PC-9 (cell line): ENCODE measurements at regions of chr5 and their contacts with region 1.

Region 1: DNA sequence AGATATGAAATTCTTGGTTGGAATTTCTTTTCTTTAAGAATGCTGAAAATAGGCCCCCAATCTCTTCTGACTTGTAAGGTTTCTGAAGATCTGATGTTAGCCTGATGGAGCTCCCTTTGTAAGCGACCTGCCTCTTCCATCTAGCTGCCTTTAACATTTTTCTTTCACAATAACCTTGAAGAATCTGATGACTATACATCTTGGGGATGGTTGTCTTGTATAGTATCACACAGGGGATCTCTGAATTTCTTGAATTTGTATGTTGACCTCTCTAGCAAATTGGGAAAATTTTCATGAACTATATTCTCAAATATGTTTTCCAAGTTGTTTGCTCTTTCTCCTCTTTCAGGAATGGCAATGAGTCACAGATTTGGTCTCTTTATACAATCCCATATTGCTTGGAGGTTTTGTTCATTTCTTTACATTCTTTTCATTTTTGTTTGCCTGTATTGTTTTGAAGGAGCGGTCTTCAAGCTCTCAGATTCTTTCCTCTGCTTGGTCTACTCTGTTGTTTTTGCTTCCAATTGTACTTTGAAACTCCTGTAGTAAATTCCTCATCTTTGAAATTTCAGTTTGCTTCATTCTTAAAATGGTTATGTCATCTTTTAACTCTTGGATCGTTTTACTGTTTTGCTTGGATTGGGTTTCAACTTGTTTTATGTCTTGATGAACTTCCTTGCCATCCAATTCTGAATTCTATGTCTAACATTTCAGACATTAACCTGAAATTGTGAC is 245.2 kb upstream of the TARS1 start:
- DNase-seq: no peak
- H3K4me3 ChIP-seq: no peak overlapping the region
- H3K27ac ChIP-seq: no peak overlapping the region
- H3K4me1 ChIP-seq: peaks cover 10% of the 10 kb centered on the region
- H3K27me3 ChIP-seq: no peaks in the 10 kb centered on the region
- CTCF ChIP-seq: no peak

Region 2: DNA sequence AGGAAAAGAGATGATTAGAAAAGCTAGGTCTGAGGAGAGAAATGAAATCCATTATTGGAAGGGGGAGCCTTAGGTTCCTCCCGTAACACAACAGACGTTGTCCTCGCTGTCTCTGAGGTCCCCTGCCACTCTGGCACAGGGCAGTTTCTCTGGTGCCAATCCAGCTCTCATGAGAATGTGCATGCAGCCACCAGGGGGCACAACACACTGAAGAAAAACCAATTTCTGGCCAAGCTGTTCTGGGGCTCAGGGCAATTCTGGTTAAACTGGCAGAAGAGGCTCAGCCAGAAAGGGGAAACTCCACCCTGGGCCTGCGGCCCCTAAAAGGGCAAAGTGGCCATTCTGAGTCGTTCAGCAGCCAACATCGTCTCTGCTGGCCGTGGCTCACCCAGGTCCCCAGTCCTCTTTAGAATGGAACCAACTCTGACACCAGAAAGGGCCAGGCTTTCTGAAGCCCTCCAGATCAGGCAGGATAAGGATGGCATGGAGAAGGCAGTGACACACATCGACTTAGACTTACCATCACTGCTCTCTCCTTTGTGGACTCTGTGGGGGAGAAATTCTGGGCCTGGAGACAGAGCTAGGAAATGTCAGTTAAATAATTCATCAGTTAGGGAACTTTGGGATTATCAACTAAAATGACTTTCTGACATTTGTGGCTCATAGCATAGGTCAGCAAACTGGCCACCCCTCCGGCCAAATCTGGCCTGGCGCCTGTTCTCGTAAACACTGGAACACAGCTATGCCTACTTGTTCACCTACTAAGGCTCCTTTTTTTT is 963.0 kb before region 1 on chr5:
- CTCF ChIA-PET with region 1: no interaction called
- POLR2A ChIA-PET with region 1: no interaction called
- intact Hi-C with region 1: no loop called
- DNase-seq: peak; percentile 67 to 92
- H3K4me3 ChIP-seq: no peak overlapping the region
- H3K27ac ChIP-seq: no peak overlapping the region
- H3K4me1 ChIP-seq: peaks cover 8% of the 10 kb centered on the region; the same call in 1 of the 2 replicates
- H3K27me3 ChIP-seq: no peaks in the 10 kb centered on the region
- CTCF ChIP-seq: peak; percentile 98

Region 3: GRCh38 chr5:33212900-33213299 is 17.3 kb after region 1 on chr5:
- CTCF ChIA-PET with region 1: no interaction called
- POLR2A ChIA-PET with region 1: interaction called, 10 read pairs
- intact Hi-C with region 1: no loop called
- DNase-seq: no peak
- H3K4me3 ChIP-seq: no peak overlapping the region
- H3K27ac ChIP-seq: no peak overlapping the region
- H3K4me1 ChIP-seq: no peaks in the 10 kb centered on the region
- H3K27me3 ChIP-seq: no peaks in the 10 kb centered on the region
- CTCF ChIP-seq: no peak